Caco-2 (cell line): ENCODE measurements at regions of chr2 and their contacts with region 1.

Region 1: GRCh38 chr2:42562474-42563144 is 5.8 kb upstream of the MTA3 start:
- DNase-seq: peak; percentile 87 to 90
- H3K4me3 ChIP-seq: no peak overlapping the region
- H3K4me3 Mint-ChIP-seq: peak overlapping the region; percentile 27
- H3K27ac Mint-ChIP-seq: peak overlapping the region; percentile 60
- H3K4me1 ChIP-seq: peaks cover 47% of the 10 kb centered on the region
- H3K4me1 Mint-ChIP-seq: peaks cover 42% of the 10 kb centered on the region
- H3K27me3 ChIP-seq: no peaks in the 10 kb centered on the region
- H3K27me3 Mint-ChIP-seq: no peaks in the 10 kb centered on the region
- CTCF ChIP-seq: no peak

Region 2: DNA sequence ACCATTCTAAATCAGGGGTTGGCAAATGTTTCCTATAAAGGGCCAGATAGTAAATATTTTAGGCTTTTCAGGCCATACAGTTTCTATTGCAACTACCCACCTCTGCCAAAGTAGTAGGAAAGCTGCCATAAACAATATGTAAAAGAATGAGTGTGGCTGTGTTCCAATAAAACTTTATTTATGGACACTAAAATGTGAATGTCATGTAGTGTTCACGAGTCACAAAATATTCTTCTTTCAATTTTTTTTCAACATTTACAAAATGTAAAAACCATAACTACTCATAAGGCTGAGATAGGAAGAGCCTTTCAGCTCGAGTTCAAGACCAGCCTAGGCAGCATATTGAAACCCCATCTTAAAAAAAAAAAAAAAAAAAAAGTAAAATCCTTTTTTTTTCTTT is 82.2 kb before region 1 on chr2:
- CTCF ChIA-PET with region 1: no interaction called
- POLR2A ChIA-PET with region 1: no interaction called
- intact Hi-C with region 1: no loop called
- DNase-seq: no peak
- H3K4me3 ChIP-seq: no peak overlapping the region
- H3K4me3 Mint-ChIP-seq: no peak overlapping the region
- H3K27ac Mint-ChIP-seq: no peak overlapping the region
- H3K4me1 ChIP-seq: no peaks in the 10 kb centered on the region
- H3K4me1 Mint-ChIP-seq: no peaks in the 10 kb centered on the region
- H3K27me3 ChIP-seq: no peaks in the 10 kb centered on the region
- H3K27me3 Mint-ChIP-seq: no peaks in the 10 kb centered on the region
- CTCF ChIP-seq: no peak

Region 3: DNA sequence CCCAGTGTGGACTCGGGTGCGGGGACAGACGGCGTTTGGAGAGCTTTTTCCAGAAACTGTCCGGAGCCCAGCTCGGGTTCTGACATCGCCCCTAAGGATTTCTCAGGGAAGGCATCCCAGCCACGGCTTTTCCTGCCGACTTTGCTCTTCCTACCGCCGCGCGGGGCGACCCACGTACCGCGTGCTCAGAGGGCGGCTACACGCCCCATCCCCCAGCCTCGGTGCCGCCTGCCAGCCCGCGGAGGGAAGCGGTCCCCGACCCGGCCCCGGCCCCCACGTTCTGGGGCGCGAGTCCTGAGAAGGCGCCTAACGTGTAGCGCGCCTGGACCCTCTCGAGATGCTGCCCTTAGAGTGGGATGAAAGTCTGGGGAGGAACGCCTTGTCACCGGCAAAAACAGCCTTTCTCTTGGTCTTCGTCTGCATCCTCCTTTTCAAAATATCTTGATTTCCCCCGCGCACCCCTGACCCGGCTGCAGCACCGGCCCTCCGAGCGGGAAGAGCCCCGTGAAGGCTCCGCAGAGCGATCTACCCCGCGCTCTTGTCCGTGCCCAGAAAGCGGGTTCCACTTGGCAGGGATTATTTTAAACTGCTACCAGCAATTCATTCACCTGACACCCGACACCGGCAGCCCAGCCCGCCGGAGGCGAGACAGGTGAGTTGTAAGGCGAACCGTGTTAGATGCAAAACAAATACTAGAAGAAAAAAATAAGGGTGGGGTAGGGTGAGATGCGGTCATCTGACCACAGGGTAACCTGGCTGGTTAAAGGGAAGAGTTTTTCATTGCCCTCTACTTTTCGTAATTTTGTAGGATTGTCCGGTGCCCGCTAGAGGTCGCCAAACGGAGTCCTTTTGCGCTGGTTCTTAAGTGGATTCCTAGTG is 68.0 kb before region 1 on chr2:
- CTCF ChIA-PET with region 1: no interaction called
- POLR2A ChIA-PET with region 1: no interaction called
- intact Hi-C with region 1: loop called (anchors 1 kb)
- DNase-seq: peak; percentile 80 to 86
- H3K4me3 ChIP-seq: peak overlapping the region; percentile 48
- H3K4me3 Mint-ChIP-seq: peak overlapping the region; percentile 98
- H3K27ac Mint-ChIP-seq: peak overlapping the region; percentile 21
- H3K4me1 ChIP-seq: no peaks in the 10 kb centered on the region
- H3K4me1 Mint-ChIP-seq: no peaks in the 10 kb centered on the region
- H3K27me3 ChIP-seq: no peaks in the 10 kb centered on the region
- H3K27me3 Mint-ChIP-seq: no peaks in the 10 kb centered on the region
- CTCF ChIP-seq: peak; percentile 91 to 94

Region 4: GRCh38 chr2:42513257-42513918 is 49.2 kb before region 1 on chr2:
- CTCF ChIA-PET with region 1: no interaction called
- POLR2A ChIA-PET with region 1: no interaction called
- intact Hi-C with region 1: loop called (anchors 2 kb)
- DNase-seq: peak; percentile 42 to 71
- H3K4me3 ChIP-seq: no peak overlapping the region
- H3K4me3 Mint-ChIP-seq: no peak overlapping the region
- H3K27ac Mint-ChIP-seq: no peak overlapping the region
- H3K4me1 ChIP-seq: no peaks in the 10 kb centered on the region
- H3K4me1 Mint-ChIP-seq: peaks cover 6% of the 10 kb centered on the region
- H3K27me3 ChIP-seq: no peaks in the 10 kb centered on the region
- H3K27me3 Mint-ChIP-seq: no peaks in the 10 kb centered on the region
- CTCF ChIP-seq: peak; percentile 65 to 67